BJ (cell line): ENCODE measurements at regions of chr1 and their contacts with region 1.

Region 1: DNA sequence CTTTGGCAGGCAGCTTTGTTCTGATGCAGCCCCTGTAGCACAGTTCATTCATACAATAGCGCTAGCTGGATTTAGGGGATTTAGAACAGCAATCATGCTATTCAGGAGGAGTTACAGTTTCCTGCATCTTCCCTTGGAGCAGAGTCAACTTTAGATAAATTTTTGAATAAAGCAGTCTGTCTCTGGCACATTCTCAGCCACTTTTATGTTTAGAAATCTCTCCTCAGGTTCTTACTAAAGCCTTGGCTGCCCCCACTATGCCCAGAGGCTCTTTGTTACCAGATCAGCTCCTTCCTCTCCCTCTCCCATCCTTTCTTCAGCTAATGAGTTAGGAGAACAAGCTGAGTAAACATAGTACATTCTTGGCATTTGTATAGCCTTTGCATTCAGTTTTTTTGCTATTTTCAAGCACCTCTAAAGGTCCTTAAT is 17.0 kb upstream of the PIGC start:
- DNase-seq: no peak
- H3K4me3 ChIP-seq: no peak overlapping the region
- H3K27me3 ChIP-seq: no peaks in the 10 kb centered on the region
- CTCF ChIP-seq: no peak

Region 2: DNA sequence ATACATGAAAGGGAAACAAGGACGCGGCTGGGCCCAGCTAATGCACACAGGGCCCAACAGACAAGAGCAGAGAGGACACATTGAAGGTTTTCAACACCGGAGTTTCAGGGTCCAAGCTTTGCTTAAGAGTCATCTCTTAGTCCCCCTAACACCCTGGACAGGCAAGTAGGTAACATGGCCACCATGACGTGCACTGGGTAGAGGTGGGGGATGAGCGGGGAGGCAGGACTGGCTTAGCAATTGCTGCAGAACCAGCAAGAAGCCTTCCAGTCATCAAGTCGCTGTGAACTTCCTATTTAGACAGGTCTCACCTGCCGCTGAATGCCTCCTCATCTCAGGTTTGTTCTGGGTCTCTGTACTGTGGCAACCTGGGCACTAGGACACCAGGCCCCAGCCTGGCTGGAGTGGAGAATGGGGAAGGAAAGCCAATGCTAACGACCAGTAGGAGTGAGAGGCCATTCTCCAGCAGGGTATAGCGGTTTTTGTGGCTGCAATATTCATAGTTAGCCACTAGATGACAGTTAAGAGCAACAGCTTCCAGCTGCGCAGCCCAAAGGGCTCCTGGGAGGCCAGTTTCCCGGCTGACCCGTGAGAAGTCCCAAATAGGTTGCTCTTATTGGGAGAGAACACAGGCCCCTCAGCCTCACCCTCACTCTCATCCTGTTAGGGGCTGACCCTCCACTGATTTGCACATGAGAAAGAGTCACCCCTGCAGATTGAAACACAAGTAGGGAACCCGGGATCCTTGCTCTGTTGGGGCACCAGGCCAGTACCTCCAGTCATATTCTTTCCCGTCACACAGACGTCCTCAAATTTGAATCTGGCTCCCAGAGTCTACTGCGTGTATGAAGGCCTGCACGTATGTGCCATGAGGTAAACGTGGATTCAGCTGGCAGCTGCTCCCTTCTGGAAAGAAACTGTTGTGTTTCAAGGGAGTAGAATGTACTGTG is 11.0 kb before region 1 on chr1:
- CTCF ChIA-PET with region 1: interaction called, 11 read pairs
- POLR2A ChIA-PET with region 1: no interaction called
- DNase-seq: no peak
- H3K4me3 ChIP-seq: no peak overlapping the region
- H3K27me3 ChIP-seq: no peaks in the 10 kb centered on the region
- CTCF ChIP-seq: peak; percentile 87